ENCODE measurements at regions of chr4 and their contacts with region 1.

Region 1: GRCh38 chr4:107930821-107931774 is at the start of gene CYP2U1:
- DNase-seq: peak; percentile 73
- H3K4me3 ChIP-seq: peak within 1 kb of the TSS; percentile 52 to 78 (median 66)
- H3K27ac ChIP-seq: no peak within 1 kb of the TSS
- H3K4me1 ChIP-seq: peaks cover 24% of the 10 kb centered on the region
- H3K27me3 ChIP-seq: no peaks in the 10 kb centered on the region
- CTCF ChIP-seq: peak in 1 of 2 donors; percentile 8
- total RNA-seq, gene CYP2U1: 7.5 to 30.7 TPM

Region 2: GRCh38 chr4:107951551-107951950 is 20.5 kb after region 1 on chr4:
- CTCF ChIA-PET with region 1: interaction called, 3 read pairs
- dilution Hi-C with region 1: no loop called
- in situ Hi-C with region 1: no loop called
- intact Hi-C with region 1: loop called (anchors 2 kb)
- DNase-seq: peak; percentile 58
- H3K4me3 ChIP-seq: no peak overlapping the region
- H3K27ac ChIP-seq: peak overlapping the region; percentile 24
- H3K4me1 ChIP-seq: peaks cover 9% of the 10 kb centered on the region
- H3K27me3 ChIP-seq: no peaks in the 10 kb centered on the region
- CTCF ChIP-seq: no peak

Region 3: DNA sequence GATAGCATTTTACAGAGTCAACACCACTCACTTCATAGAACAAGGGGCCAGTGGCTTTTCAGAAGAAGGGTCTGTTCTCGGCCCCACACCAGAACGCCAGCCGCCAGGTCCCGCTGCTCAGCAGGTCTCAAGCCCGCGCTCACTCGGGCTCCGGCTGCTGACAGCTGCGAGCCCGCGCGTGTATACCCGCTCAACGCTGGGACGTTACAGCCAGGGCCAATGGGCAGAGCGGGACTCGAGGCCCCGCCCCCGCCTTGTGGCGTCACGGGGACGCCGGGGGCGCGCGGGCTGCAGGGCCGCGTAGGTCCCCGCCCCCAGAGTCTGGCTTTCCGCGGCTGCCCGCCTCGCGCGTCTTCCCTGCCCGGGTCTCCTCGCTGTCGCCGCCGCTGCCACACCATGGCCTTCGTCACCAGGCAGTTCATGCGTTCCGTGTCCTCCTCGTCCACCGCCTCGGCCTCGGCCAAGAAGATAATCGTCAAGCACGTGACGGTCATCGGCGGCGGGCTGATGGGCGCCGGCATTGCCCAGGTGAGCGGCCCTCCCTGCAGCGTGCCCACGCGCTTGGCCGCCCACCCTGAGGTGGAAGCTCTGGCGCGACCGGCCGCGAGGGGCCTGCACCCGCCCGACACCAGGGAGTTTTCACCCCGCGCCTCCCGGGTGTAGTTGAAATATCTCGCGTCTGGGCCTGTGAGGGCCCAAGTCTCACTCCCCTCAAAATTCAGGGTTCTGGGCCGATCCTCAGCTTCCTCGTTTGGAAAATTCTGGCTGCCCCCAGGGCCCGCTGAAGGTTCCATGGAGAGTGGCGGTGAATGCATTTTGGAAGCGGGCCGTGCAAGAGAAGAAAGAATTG is 58.7 kb after region 1 on chr4 and contains the start of gene HADH:
- CTCF ChIA-PET with region 1: no interaction called
- dilution Hi-C with region 1: no loop called
- in situ Hi-C with region 1: no loop called
- intact Hi-C with region 1: loop called (anchors 1 kb)
- DNase-seq: peak; percentile 90
- H3K4me3 ChIP-seq: peak within 1 kb of the TSS; percentile 79 to 99 (median 97)
- H3K27ac ChIP-seq: peak within 1 kb of the TSS; percentile 64
- H3K4me1 ChIP-seq: peaks cover 21% of the 10 kb centered on the region
- H3K27me3 ChIP-seq: no peaks in the 10 kb centered on the region
- CTCF ChIP-seq: no peak
- total RNA-seq, gene HADH: 48.6 to 65.2 TPM

Measured in mammary epithelial cell (primary cell).